Endothelial cell of umbilical vein (primary cell): ENCODE measurements at regions of chr9 and their contacts with region 1.

Region 1: GRCh38 chr9:73104342-73104741 is 47.3 kb upstream of the ANXA1 start:
- DNase-seq: no peak
- H3K4me3 ChIP-seq: no peak overlapping the region
- H3K27ac ChIP-seq: no peak overlapping the region
- H3K4me1 ChIP-seq: no peaks in the 10 kb centered on the region
- H3K27me3 ChIP-seq: no peaks in the 10 kb centered on the region
- CTCF ChIP-seq: no peak
- POLR2A ChIP-seq: no peak

Region 2: GRCh38 chr9:73093740-73094379 is 10.5 kb before region 1 on chr9:
- CTCF ChIA-PET with region 1: interaction called, 22 read pairs
- POLR2A ChIA-PET with region 1: no interaction called
- dilution Hi-C with region 1: no loop called
- intact Hi-C with region 1: no loop called
- DNase-seq: peak; percentile 40
- H3K4me3 ChIP-seq: peak overlapping the region in 2 of 3 experiments; percentile 33 to 36
- H3K27ac ChIP-seq: peak overlapping the region; percentile 18
- H3K4me1 ChIP-seq: peaks cover 3% of the 10 kb centered on the region
- H3K27me3 ChIP-seq: no peaks in the 10 kb centered on the region
- CTCF ChIP-seq: no peak
- POLR2A ChIP-seq: no peak

Region 3: GRCh38 chr9:73132034-73132776 is 27.9 kb after region 1 on chr9:
- CTCF ChIA-PET with region 1: interaction called, 14 read pairs
- POLR2A ChIA-PET with region 1: no interaction called
- dilution Hi-C with region 1: no loop called
- intact Hi-C with region 1: no loop called
- DNase-seq: peak; percentile 94
- H3K4me3 ChIP-seq: peak overlapping the region; percentile 29 to 92 (median 84)
- H3K27ac ChIP-seq: peak overlapping the region; percentile 95
- H3K4me1 ChIP-seq: peaks cover 27% of the 10 kb centered on the region
- H3K27me3 ChIP-seq: no peaks in the 10 kb centered on the region
- CTCF ChIP-seq: no peak
- POLR2A ChIP-seq: peak; percentile 41

Region 4: GRCh38 chr9:73149371-73150067 is 45.2 kb after region 1 on chr9:
- CTCF ChIA-PET with region 1: interaction called, 90 read pairs
- POLR2A ChIA-PET with region 1: interaction called, 4 read pairs
- dilution Hi-C with region 1: no loop called
- intact Hi-C with region 1: loop called (anchors 1 kb)
- DNase-seq: peak; percentile 88
- H3K4me3 ChIP-seq: peak overlapping the region in 1 of 3 experiments; percentile 23
- H3K27ac ChIP-seq: peak overlapping the region; percentile 77
- H3K4me1 ChIP-seq: peaks cover 44% of the 10 kb centered on the region
- H3K27me3 ChIP-seq: no peaks in the 10 kb centered on the region
- CTCF ChIP-seq: no peak
- POLR2A ChIP-seq: no peak

Region 5: GRCh38 chr9:73176450-73176875 is 72.1 kb after region 1 on chr9:
- CTCF ChIA-PET with region 1: interaction called, 114 read pairs
- POLR2A ChIA-PET with region 1: no interaction called
- dilution Hi-C with region 1: no loop called
- intact Hi-C with region 1: loop called (anchors 1 kb)
- DNase-seq: no peak
- H3K4me3 ChIP-seq: no peak overlapping the region
- H3K27ac ChIP-seq: no peak overlapping the region
- H3K4me1 ChIP-seq: peaks cover 4% of the 10 kb centered on the region
- H3K27me3 ChIP-seq: no peaks in the 10 kb centered on the region
- CTCF ChIP-seq: no peak
- POLR2A ChIP-seq: no peak